ENCODE measurements at regions of chr16 and their contacts with region 1.

Region 1: DNA sequence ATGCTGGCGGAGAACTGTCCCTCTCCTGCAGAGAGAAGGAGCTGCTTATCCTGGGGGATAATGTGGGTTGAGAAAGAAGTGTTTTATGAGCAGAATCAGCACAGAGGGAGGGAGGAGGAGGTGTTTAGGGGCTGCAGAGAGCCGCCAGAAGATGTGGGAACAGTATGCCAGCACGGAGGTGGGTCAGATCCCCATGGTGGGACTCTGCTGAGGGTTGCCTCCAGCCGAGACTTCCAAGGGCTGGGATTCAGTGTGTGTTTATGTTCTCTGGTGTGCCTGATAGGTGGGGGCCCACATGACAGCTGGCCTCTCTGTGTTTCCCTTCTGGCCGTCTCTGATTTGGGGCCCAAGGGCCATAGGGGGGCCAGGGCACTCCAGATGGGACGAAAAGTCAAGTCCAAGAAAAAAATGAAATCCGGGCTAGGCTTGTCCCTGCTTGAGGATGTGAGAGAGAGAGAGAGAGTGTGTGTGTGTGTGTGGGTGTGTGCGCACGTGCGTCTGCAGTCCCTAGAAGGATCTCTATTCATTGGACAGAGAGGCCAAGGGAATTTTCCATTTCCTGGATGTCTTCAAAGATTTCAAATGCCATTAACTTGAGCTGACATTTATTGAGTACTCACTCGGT is 21.6 kb downstream of the PRKCB start:
- DNase-seq: no peak
- H3K4me3 ChIP-seq: no peak overlapping the region
- H3K27ac ChIP-seq: no peak overlapping the region
- H3K4me1 ChIP-seq: no peaks in the 10 kb centered on the region
- H3K27me3 ChIP-seq: no peaks in the 10 kb centered on the region
- CTCF ChIP-seq: no peak
- POLR2A ChIP-seq: no peak

Region 2: GRCh38 chr16:23823475-23824384 is 33.6 kb before region 1 on chr16:
- intact Hi-C with region 1: loop called (anchors 2 kb)
- DNase-seq: no peak
- H3K4me3 ChIP-seq: no peak overlapping the region
- H3K27ac ChIP-seq: no peak overlapping the region
- H3K4me1 ChIP-seq: no peaks in the 10 kb centered on the region
- H3K27me3 ChIP-seq: peaks cover 0 to 5% of the 10 kb centered on the region in 2 donors
- CTCF ChIP-seq: no peak
- POLR2A ChIP-seq: no peak